Activated CD4-positive, alpha-beta T cell treated with anti-CD3 and anti-CD28 coated beads for 36 hours (primary cell): ENCODE measurements at regions of chr13 and their contacts with region 1.

Region 1: GRCh38 chr13:31050486-31051400 is 111.0 kb downstream of the HSPH1 start:
- DNase-seq: no peak
- ATAC-seq: peak; percentile 53
- H3K4me3 Mint-ChIP-seq: no peak overlapping the region
- H3K27ac Mint-ChIP-seq: no peak overlapping the region
- H3K4me1 Mint-ChIP-seq: peaks cover 15% of the 10 kb centered on the region
- H3K27me3 Mint-ChIP-seq: peaks cover 5% of the 10 kb centered on the region

Region 2: DNA sequence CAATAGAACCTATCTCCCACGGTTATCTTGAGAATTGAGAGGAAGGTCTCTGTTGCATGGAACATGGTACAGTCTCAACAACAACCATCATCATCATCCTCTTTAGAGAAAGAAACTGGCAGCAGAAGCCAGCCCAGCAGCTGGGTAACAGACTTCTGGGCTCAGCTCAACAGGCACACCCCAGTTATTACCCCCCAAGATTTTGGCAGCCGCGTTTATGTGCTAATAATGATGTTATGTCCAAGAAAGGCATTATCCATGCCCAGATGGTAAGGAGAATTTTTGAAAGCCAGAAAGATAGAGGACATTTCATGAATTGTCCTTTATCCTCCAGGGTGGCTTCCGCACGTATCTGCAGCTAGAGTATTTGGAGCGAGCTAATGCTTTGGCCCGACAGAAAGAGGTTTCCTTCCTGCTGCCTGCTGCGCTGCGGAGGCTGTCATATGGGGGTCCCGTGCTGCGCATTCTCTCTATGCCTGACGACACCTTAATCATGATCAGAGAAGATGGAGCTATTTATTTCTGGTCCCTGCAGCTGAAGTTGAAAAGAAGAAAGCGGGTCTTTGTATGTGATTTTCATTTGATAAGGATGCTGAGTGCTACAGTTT is 28.4 kb before region 1 on chr13:
- CTCF ChIA-PET with region 1: no interaction called
- POLR2A ChIA-PET with region 1: no interaction called
- intact Hi-C with region 1: no loop called
- DNase-seq: no peak
- ATAC-seq: no peak
- H3K4me3 Mint-ChIP-seq: no peak overlapping the region
- H3K27ac Mint-ChIP-seq: no peak overlapping the region
- H3K4me1 Mint-ChIP-seq: no peaks in the 10 kb centered on the region
- H3K27me3 Mint-ChIP-seq: peaks cover 22% of the 10 kb centered on the region

Region 3: GRCh38 chr13:31073859-31074718 is 23.3 kb after region 1 on chr13:
- CTCF ChIA-PET with region 1: interaction called, 9 read pairs
- POLR2A ChIA-PET with region 1: interaction called, 18 read pairs
- intact Hi-C with region 1: loop called (anchors 1 kb)
- DNase-seq: peak; percentile 76
- ATAC-seq: peak; percentile 89
- H3K4me3 Mint-ChIP-seq: no peak overlapping the region
- H3K27ac Mint-ChIP-seq: no peak overlapping the region
- H3K4me1 Mint-ChIP-seq: peaks cover 14% of the 10 kb centered on the region
- H3K27me3 Mint-ChIP-seq: peaks cover 13% of the 10 kb centered on the region

Region 4: GRCh38 chr13:31119966-31120700 is 69.4 kb after region 1 on chr13:
- CTCF ChIA-PET with region 1: interaction called, 6 read pairs
- POLR2A ChIA-PET with region 1: no interaction called
- intact Hi-C with region 1: loop called in 1 of 2 experiments (anchors 5 kb)
- DNase-seq: no peak
- ATAC-seq: no peak
- H3K4me3 Mint-ChIP-seq: no peak overlapping the region
- H3K27ac Mint-ChIP-seq: no peak overlapping the region
- H3K4me1 Mint-ChIP-seq: peaks cover 2% of the 10 kb centered on the region
- H3K27me3 Mint-ChIP-seq: peaks cover 43% of the 10 kb centered on the region

Region 5: DNA sequence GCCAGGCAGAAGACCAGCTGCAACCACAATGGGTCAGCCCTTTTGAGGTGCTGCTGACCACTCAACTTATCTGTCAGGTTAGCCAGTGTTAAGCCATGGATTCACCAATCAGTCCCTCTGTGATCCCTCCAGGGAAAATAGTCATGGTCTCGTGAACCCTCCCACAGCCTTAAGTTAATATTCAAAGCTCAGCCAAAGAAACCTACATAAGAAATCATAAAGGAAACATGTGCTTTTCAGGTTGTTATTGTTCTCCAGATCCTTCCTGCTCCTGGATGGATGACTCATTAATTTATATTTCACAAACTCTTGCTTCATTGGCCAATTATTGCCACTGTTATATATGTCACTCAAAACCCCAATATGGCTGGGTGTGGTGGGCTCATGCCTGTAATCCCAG is 310.9 kb after region 1 on chr13:
- CTCF ChIA-PET with region 1: no interaction called
- POLR2A ChIA-PET with region 1: no interaction called
- intact Hi-C with region 1: no loop called
- DNase-seq: no peak
- ATAC-seq: no peak
- H3K4me3 Mint-ChIP-seq: no peak overlapping the region
- H3K27ac Mint-ChIP-seq: no peak overlapping the region
- H3K4me1 Mint-ChIP-seq: no peaks in the 10 kb centered on the region
- H3K27me3 Mint-ChIP-seq: no peaks in the 10 kb centered on the region